A673 (cell line): ENCODE measurements at regions of chr13 and their contacts with region 1.

Region 1: GRCh38 chr13:53151336-53152056 is 122.9 kb downstream of the OLFM4 start:
- DNase-seq: peak; percentile 79
- H3K4me3 ChIP-seq: no peak overlapping the region
- H3K27ac ChIP-seq: no peak overlapping the region
- H3K4me1 ChIP-seq: peaks cover 7% of the 10 kb centered on the region
- H3K27me3 ChIP-seq: no peaks in the 10 kb centered on the region
- CTCF ChIP-seq: peak; percentile 95

Region 2: DNA sequence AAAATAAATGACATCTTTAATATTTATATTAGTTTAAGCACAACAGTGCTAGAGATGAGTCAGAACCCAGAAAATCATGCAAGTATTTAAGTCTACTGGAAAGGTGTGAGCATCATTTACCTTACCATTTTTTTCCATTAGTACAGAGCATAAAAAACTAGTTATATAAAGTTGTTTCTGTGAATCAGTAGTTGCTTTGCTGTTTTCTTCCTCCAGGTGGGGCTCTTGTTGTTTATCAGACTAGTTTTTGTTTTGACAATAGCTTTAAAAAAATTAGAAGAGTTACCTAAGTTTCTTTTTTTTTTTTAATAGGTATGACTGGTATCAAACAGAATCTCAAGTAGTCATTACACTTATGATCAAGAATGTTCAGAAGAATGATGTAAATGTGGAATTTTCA is 486.2 kb before region 1 on chr13:
- CTCF ChIA-PET with region 1: interaction called, 11 read pairs
- POLR2A ChIA-PET with region 1: no interaction called
- intact Hi-C with region 1: no loop called
- DNase-seq: peak; percentile 34
- H3K4me3 ChIP-seq: no peak overlapping the region
- H3K27ac ChIP-seq: no peak overlapping the region
- H3K4me1 ChIP-seq: peaks cover 6% of the 10 kb centered on the region
- H3K27me3 ChIP-seq: no peaks in the 10 kb centered on the region
- CTCF ChIP-seq: peak; percentile 64

Region 3: DNA sequence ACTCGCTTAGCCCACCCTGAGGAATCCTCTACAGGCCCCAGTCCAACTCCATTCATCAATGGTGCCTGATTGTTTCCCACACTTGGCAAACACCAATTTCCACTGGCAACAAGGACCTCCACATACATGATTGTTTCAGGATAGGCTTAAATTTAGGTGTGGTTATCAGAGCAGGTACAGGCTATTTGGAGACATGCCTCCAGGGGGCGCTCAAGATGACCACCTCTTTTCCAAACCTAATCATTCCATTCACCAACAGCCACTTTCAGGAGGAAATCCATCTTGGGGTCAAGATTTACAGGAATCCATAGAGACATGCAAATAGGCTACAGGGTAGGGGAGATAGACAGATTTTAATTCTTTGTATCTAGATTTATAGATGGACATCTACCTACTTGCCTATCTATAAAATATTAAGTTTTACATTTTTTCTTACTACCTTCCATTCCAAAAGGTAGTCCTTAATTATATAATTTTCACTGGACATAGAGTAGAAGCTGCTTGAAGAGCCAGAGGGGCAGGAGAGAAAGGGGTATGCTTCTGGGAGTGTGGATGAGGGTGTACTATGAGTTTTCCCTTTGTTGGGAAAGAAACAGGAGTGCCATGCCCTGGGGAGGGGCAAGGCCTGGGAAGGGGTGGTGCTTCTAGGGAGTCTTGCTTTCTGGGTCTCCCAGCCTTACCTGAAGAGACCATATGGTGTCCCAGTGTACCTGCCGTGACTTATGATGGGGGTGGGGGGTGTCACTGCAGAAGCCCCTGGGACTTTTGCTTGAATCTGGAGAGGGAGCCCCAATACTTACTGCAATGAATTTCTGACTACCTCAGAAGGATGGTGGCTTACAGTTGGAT is 288.9 kb before region 1 on chr13:
- CTCF ChIA-PET with region 1: no interaction called
- POLR2A ChIA-PET with region 1: no interaction called
- intact Hi-C with region 1: loop called (anchors 5 kb)
- DNase-seq: peak; percentile 34
- H3K4me3 ChIP-seq: no peak overlapping the region
- H3K27ac ChIP-seq: no peak overlapping the region
- H3K4me1 ChIP-seq: no peaks in the 10 kb centered on the region
- H3K27me3 ChIP-seq: peaks cover 8% of the 10 kb centered on the region
- CTCF ChIP-seq: peak; percentile 89

Region 4: GRCh38 chr13:52896827-52897659 is 254.5 kb before region 1 on chr13:
- CTCF ChIA-PET with region 1: interaction called, 18 read pairs
- POLR2A ChIA-PET with region 1: interaction called, 7 read pairs
- intact Hi-C with region 1: no loop called
- DNase-seq: peak; percentile 49
- H3K4me3 ChIP-seq: no peak overlapping the region
- H3K27ac ChIP-seq: no peak overlapping the region
- H3K4me1 ChIP-seq: no peaks in the 10 kb centered on the region
- H3K27me3 ChIP-seq: no peaks in the 10 kb centered on the region
- CTCF ChIP-seq: peak; percentile 66

Region 5: DNA sequence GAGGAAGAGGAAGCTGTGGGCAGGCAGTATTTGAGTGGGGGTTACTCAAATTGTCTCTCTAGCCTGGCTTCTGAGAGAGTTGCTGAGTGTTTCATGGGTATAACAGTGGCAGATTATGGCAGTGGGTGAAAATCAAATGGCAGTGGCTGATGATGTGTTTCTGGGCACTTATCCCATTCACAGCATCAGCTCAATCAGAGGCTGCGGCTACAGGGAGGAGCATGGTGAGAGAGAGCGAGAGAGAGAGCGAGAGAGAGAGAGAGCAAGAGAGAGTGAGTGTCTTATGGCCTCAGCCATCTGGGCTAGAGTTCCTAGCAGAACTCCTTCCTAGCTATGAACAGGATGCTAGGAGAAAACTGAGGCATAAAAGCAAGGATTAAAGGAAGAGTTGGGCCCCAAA is 56.1 kb after region 1 on chr13:
- CTCF ChIA-PET with region 1: no interaction called
- POLR2A ChIA-PET with region 1: no interaction called
- intact Hi-C with region 1: no loop called
- DNase-seq: peak; percentile 50
- H3K4me3 ChIP-seq: no peak overlapping the region
- H3K27ac ChIP-seq: no peak overlapping the region
- H3K4me1 ChIP-seq: no peaks in the 10 kb centered on the region
- H3K27me3 ChIP-seq: no peaks in the 10 kb centered on the region
- CTCF ChIP-seq: no peak